ENCODE measurements at regions of chr11 and their contacts with region 1.

Region 1: GRCh38 chr11:65117216-65118096 is at the start of gene ZNHIT2:
- DNase-seq: peak; percentile 100
- ATAC-seq: peak; percentile 86 to 88
- H3K4me3 ChIP-seq: peak within 1 kb of the TSS; percentile 57
- H3K27ac ChIP-seq: peak within 1 kb of the TSS; percentile 48
- H3K4me1 ChIP-seq: no peaks in the 10 kb centered on the region
- H3K27me3 ChIP-seq: no peaks in the 10 kb centered on the region
- total RNA-seq, gene ZNHIT2: 6.4 to 9.2 (median 7.8) TPM

Region 2: GRCh38 chr11:64787526-64788320 is 329.7 kb before region 1 on chr11:
- intact Hi-C with region 1: loop called in 1 of 4 experiments (anchors 10 kb)
- DNase-seq: peak; percentile 72 to 84 (median 83)
- ATAC-seq: peak; percentile 34 to 68
- H3K4me3 ChIP-seq: no peak overlapping the region
- H3K27ac ChIP-seq: no peak overlapping the region
- H3K4me1 ChIP-seq: no peaks in the 10 kb centered on the region
- H3K27me3 ChIP-seq: no peaks in the 10 kb centered on the region

Region 3: DNA sequence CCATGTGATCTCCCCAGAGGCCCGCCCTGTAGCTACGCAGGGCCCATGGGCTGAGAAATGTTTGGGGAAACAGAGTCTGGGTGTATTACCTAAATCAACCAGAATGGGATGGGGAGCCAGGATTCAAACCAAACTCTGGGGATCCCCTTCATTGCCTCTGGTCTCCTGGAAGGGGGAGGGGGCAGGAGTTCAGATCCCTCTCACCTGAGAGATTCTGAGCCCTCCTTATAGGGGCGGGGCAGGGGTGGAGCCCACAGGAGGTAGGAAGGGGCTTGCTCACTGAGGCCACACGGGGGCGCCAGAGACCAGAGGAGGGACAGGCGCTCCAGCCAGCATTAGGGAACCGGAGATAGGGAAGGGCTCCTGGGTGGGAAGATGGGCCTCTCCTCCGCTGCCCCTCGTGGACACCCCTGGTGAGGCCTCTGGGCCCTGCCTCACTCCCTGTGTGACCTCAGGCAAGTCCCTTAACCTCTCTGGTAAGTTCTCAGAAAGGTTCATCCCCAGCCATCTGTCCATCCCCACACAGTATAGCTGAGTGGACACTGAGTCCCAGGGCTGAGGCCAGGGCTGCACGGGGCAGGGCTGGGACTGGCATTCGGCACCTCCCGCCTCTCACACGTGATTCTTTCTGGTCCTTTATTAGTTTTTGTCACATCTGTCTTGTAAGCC is 270.3 kb before region 1 on chr11:
- intact Hi-C with region 1: loop called in 1 of 4 experiments (anchors 10 kb)
- DNase-seq: peak; percentile 93 to 97 (median 95)
- ATAC-seq: peak; percentile 86 to 88
- H3K4me3 ChIP-seq: no peak overlapping the region
- H3K27ac ChIP-seq: no peak overlapping the region
- H3K4me1 ChIP-seq: peaks cover 11% of the 10 kb centered on the region
- H3K27me3 ChIP-seq: no peaks in the 10 kb centered on the region

Region 4: DNA sequence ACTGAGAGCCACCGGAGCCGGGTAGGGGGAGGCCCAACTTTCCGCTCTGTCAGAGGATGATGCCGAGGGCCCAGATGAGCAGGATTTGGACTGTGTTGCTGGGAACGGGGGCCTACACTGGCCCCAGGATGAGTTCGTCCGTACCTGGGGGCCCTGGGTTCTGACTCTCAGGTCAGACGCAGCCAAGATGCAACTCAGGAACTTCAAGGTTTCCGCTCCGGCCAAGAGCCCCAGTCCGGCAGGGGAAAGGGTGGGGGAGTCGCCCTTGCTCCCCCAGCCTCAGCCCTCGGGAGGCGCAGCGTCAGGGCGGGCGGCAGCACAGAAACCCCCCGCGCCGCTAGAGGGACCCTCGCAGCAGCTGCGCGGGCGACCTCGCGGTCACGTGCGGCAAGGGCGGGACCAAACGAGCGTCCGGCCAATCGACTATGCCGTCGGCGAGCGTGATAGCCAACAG is 103.7 kb before region 1 on chr11:
- intact Hi-C with region 1: loop called in 1 of 4 experiments (anchors 5 kb)
- DNase-seq: peak; percentile 94 to 98 (median 98)
- ATAC-seq: peak; percentile 93 to 95
- H3K4me3 ChIP-seq: peak overlapping the region; percentile 58
- H3K27ac ChIP-seq: peak overlapping the region; percentile 90
- H3K4me1 ChIP-seq: no peaks in the 10 kb centered on the region
- H3K27me3 ChIP-seq: no peaks in the 10 kb centered on the region

Region 5: GRCh38 chr11:65027213-65028067 is 90.0 kb before region 1 on chr11 and contains the start of gene SNX15:
- intact Hi-C with region 1: loop called in 1 of 4 experiments (anchors 10 kb)
- DNase-seq: peak; percentile 95 to 97 (median 97)
- ATAC-seq: peak; percentile 99
- H3K4me3 ChIP-seq: peak within 1 kb of the TSS; percentile 67
- H3K27ac ChIP-seq: peak within 1 kb of the TSS; percentile 84
- H3K4me1 ChIP-seq: no peaks in the 10 kb centered on the region
- H3K27me3 ChIP-seq: no peaks in the 10 kb centered on the region
- total RNA-seq, gene SNX15: 14.3 to 25.2 (median 19.9) TPM

Measured in right cardiac atrium (tissue), 5 donors.